Dorsolateral prefrontal cortex (tissue), 120 donors: ENCODE measurements at regions of chr4 and their contacts with region 1.

Region 1: DNA sequence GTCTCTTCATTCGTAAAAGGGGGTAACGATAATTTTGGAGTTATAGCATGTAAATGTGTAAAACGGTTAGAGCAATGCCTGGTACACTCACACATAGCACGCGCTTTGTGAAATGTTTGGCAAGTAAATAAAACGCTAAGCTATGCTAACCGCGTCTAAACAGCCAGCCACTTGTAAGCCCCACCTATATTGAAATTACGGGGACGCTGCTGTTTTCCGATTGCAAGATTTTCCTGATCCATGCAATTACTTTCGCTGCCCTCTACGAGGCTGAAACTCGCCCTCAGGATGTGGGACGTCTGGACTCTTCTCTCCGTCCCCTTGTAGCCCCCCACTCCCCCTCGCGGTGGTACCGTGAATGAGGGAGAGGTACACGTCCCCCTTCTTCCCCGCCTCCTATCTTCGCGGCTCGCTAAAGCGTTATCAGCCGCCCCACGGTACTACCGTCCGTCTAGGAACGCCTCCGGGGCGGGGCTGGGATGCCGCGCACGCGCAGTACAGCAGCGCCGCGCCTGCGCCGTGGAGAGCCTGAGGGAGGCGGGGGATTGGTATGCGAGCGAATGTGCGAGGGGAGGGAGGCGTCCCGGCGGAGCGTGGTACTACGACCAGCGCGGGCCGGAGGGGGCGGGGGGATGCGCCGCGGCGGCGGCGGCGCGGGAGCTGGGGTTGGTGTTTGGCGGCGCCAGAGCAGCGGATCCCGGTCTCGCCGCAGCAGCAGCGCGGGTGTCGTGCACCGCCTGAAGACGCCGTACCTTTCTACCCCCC is at the start of gene STIM2:
- DNase-seq: peak; percentile 92 to 99 (median 95)
- H3K4me3 ChIP-seq: peak within 1 kb of the TSS; percentile 68 to 96 (median 85)
- H3K27ac ChIP-seq: peak within 1 kb of the TSS; percentile 80 to 99 (median 96)
- H3K27me3 ChIP-seq: no peaks in the 10 kb centered on the region
- CTCF ChIP-seq: peak in 42 of 56 donors; percentile 12 to 53 (median 35)
- total RNA-seq, gene STIM2: 29.4 to 57.1 (median 40.5) TPM

Region 2: DNA sequence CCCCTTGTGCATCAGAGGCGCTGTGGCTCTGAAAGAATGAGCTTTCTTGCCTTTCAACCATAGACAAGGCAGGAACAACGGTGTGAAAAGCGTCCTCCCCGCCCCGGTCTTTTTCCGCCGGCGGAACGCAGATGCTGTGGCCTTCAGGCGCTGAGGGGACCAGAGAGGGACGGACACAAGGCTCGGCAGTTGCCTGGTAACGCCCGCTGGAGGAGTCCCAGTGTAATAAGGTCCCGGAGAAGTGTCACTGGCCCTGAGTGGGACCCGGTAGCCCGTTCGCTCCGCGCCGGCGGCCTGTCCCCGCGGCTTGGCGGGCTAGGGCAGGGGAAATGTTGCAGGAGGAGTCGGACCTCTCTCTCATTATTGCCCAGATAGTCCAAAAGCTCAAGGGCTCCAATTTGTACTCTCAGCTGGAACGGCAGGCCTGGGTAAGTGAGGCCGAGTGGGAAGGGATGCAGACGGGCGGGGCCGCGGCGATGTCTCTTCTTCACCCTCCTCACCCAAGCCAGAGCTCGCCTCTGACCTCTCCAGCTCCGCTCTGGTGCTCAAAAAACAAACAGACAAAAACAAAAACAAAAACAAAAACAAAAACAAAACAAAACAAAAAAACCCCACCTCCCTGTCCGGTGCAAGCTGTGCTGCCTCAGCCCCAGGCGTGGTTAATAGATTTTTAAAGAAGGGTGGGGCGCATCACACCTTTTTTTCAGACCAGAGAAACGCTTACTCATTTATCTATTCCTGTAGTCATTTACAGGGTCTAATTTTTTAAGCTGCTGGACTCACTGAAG is 276.3 kb before region 1 on chr4 and contains the start of gene TBC1D19:
- intact Hi-C with region 1: loop called (anchors 5 kb)
- DNase-seq: peak; percentile 78 to 93 (median 88)
- H3K4me3 ChIP-seq: peak within 1 kb of the TSS; percentile 55 to 98 (median 85)
- H3K27ac ChIP-seq: peak within 1 kb of the TSS; percentile 21 to 92 (median 76)
- H3K27me3 ChIP-seq: no peaks in the 10 kb centered on the region
- CTCF ChIP-seq: peak in 37 of 56 donors; percentile 8 to 61 (median 29)
- total RNA-seq, gene TBC1D19: 14.4 to 38.3 (median 22.7) TPM

Region 3: GRCh38 chr4:26992657-26993361 is 132.5 kb after region 1 on chr4:
- intact Hi-C with region 1: loop called (anchors 5 kb)
- DNase-seq: peak in 7 of 10 donors; percentile 7 to 64 (median 45)
- H3K4me3 ChIP-seq: peak overlapping the region in 2 of 59 donors; percentile 7 to 10
- H3K27ac ChIP-seq: peak overlapping the region in 55 of 59 donors; percentile 0 to 81 (median 56)
- H3K27me3 ChIP-seq: no peaks in the 10 kb centered on the region
- CTCF ChIP-seq: no peak

Region 4: DNA sequence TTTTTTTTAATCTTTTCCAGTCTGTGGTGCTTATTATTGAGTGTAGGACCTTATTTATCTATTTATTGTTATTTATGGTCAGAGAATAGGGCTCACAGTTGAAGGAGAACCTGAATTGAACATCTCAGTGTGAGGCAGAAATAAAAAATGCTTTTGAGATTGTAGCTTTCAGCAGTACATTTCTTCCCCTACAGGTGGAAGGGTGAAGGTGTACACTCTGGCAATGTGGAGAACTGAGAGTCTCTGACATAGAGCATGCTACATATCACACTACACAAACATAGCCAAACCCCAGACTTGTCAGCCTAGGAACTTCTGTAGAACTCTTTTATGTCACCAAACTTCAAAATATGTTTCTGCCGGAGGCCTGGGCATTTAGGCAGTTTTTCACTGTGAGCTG is 140.5 kb after region 1 on chr4:
- intact Hi-C with region 1: loop called in 1 of 2 experiments (anchors 5 kb)
- DNase-seq: no peak
- H3K4me3 ChIP-seq: no peak overlapping the region
- H3K27ac ChIP-seq: no peak overlapping the region
- H3K27me3 ChIP-seq: no peaks in the 10 kb centered on the region
- CTCF ChIP-seq: peak in 1 of 56 donors; percentile 9

Region 5: GRCh38 chr4:27010334-27010940 is 150.1 kb after region 1 on chr4:
- intact Hi-C with region 1: loop called (anchors 1 to 5 kb)
- DNase-seq: peak; percentile 32 to 73 (median 62)
- H3K4me3 ChIP-seq: peak overlapping the region in 2 of 59 donors; percentile 8 to 15
- H3K27ac ChIP-seq: peak overlapping the region in 5 of 59 donors; percentile 5 to 40 (median 9)
- H3K27me3 ChIP-seq: no peaks in the 10 kb centered on the region
- CTCF ChIP-seq: peak; percentile 65 to 97 (median 91)